Activated CD4-positive, alpha-beta memory T cell treated with anti-CD3 and anti-CD28 coated beads, Interleukin-2, amount 10 ng/mL, durations not matched to agents 7 days and 5 days (primary cell): ENCODE measurements at regions of chr3 and their contacts with region 1.

Region 1: GRCh38 chr3:56682462-56683121 is 473 bp downstream of the TASOR start:
- DNase-seq: peak; percentile 80
- H3K4me3 Mint-ChIP-seq: peak overlapping the region; percentile 98
- H3K27ac Mint-ChIP-seq: peak overlapping the region; percentile 97
- H3K4me1 Mint-ChIP-seq: peaks cover 50% of the 10 kb centered on the region
- H3K27me3 Mint-ChIP-seq: no peaks in the 10 kb centered on the region

Region 2: GRCh38 chr3:56593455-56594158 is 89.0 kb before region 1 on chr3:
- CTCF ChIA-PET with region 1: no interaction called
- POLR2A ChIA-PET with region 1: interaction called, 12 read pairs
- DNase-seq: peak; percentile 63
- H3K4me3 Mint-ChIP-seq: peak overlapping the region; percentile 23
- H3K27ac Mint-ChIP-seq: peak overlapping the region; percentile 76
- H3K4me1 Mint-ChIP-seq: peaks cover 25% of the 10 kb centered on the region
- H3K27me3 Mint-ChIP-seq: no peaks in the 10 kb centered on the region

Region 3: GRCh38 chr3:56693750-56694149 is 11.2 kb after region 1 on chr3:
- CTCF ChIA-PET with region 1: interaction called, 6 read pairs
- POLR2A ChIA-PET with region 1: interaction called, 80 read pairs
- DNase-seq: no peak
- H3K4me3 Mint-ChIP-seq: peak overlapping the region; percentile 11
- H3K27ac Mint-ChIP-seq: peak overlapping the region; percentile 75
- H3K4me1 Mint-ChIP-seq: peaks cover 43% of the 10 kb centered on the region
- H3K27me3 Mint-ChIP-seq: no peaks in the 10 kb centered on the region

Region 4: DNA sequence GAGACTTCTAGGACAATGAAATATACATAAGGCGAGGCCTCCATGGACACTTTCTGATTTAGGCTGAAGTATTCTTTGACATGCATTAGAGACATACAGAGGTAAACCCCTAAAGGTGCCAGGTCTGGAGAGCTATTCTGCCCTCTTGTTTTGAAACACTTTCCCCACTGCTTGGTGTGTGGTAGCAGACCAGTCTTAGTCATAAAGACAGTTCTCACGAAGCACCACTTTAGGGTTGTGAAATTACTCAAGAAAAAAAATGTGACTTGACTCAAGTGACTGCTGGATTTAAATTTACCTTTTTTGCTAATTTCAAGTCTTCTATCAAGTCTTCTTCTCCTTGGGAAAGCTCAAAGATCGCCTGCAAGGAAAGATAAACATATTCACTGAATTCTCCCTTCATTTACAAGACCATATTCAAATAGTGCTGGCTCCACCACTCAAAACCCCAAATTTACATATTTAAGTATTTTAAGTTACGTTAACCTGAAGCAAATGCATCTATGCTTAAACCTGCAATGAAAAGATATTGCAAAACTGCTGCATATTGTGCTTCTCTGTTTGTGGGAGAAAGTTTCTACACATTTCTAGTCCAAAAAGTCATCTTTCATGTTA is 70.7 kb after region 1 on chr3:
- CTCF ChIA-PET with region 1: no interaction called
- POLR2A ChIA-PET with region 1: interaction called, 10 read pairs
- DNase-seq: peak; percentile 55
- H3K4me3 Mint-ChIP-seq: peak overlapping the region; percentile 3
- H3K27ac Mint-ChIP-seq: peak overlapping the region; percentile 85
- H3K4me1 Mint-ChIP-seq: peaks cover 60% of the 10 kb centered on the region
- H3K27me3 Mint-ChIP-seq: no peaks in the 10 kb centered on the region

Region 5: DNA sequence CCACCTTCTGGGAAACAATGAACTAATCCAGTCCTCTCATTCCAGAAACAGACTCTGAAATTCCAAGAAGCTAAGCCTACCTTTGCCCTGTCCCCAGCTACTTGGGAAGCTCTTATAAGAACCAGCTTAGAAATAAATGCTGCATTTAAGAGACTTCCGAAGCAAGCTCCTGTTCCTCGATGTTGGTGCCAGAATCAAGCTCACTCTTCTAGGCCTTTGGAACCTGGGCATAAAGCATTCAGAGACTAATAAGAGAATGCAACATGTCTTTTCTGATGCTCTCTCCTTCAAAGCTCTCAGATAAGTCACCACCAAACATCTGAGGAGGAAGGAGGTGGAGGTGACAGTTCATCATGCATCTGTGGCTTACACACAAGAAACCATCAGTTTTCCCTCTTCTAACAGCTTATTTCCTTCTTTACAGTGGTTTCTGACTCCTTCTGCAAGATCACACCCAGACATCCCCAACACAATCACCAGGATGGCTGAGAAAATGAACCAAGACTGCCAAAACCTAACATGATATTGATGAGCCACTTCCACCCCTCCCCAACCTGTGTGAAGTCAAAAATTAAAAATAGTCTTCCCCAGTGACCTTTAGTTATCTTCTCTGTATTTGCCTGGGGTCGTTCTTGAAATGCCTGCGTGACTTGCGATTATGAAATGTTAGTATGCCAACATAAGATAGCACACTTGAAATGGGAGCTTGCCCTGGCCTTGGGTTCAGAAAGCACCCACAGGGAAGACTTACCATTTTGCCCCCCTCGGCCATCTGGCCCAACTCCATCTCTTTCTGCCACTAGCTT is 107.6 kb after region 1 on chr3:
- CTCF ChIA-PET with region 1: interaction called, 6 read pairs
- POLR2A ChIA-PET with region 1: interaction called, 25 read pairs
- DNase-seq: peak; percentile 24
- H3K4me3 Mint-ChIP-seq: peak overlapping the region; percentile 51
- H3K27ac Mint-ChIP-seq: peak overlapping the region; percentile 93
- H3K4me1 Mint-ChIP-seq: peaks cover 81% of the 10 kb centered on the region
- H3K27me3 Mint-ChIP-seq: no peaks in the 10 kb centered on the region